Mammary epithelial cell (primary cell): ENCODE measurements at regions of chr2 and their contacts with region 1.

Region 1: DNA sequence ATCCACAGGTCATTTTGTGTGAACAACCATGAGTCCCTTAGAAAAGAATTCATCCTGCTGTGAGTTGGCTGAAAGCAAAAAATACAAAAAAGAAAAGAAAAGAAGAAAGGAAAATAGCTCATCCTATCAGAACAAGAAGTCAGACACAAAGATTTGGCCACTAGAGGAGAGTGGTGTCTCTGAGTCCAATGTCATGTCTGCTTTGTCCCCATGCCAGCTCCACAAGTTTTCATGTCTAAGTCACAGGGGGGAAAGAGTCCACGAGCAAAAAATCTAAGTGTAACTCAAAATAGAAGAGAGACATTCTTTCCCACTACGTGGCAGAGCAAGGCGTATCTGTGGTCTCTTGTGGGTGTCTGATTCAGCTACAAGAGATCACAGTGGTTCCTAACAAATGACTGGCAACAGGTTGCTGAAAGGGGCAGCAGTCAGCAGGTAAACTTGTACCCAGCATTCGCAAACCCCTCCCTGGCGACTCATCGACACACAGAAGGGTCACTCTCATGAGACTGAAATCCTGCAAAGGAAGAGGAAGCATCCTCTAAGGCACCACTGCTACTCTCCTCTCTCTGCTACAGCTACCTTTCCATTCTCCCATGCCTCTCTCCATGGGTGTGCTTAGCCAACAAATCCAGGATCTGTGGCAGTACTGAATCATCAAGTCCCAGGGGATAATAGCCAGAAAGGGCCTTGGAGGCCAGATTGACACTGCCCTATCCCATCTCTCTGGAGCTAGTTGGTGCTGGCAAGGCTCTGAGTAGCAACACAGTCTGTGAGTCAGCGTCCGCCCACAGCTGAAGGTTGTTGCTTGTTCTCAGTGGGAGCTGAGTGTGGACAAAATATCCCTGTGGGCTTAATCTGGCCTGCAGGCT is 123.0 kb upstream of the SLC39A10 start:
- DNase-seq: peak; percentile 84
- H3K4me3 ChIP-seq: no peak overlapping the region
- H3K27ac ChIP-seq: peak overlapping the region; percentile 56
- H3K4me1 ChIP-seq: peaks cover 19% of the 10 kb centered on the region
- H3K27me3 ChIP-seq: no peaks in the 10 kb centered on the region
- CTCF ChIP-seq: peak in 1 of 2 donors; percentile 25

Region 2: GRCh38 chr2:195575879-195576401 is 41.9 kb after region 1 on chr2:
- CTCF ChIA-PET with region 1: no interaction called
- dilution Hi-C with region 1: loop called (anchors 5 kb)
- in situ Hi-C with region 1: no loop called
- intact Hi-C with region 1: no loop called
- DNase-seq: peak; percentile 83
- H3K4me3 ChIP-seq: no peak overlapping the region
- H3K27ac ChIP-seq: peak overlapping the region; percentile 75
- H3K4me1 ChIP-seq: peaks cover 4% of the 10 kb centered on the region
- H3K27me3 ChIP-seq: no peaks in the 10 kb centered on the region
- CTCF ChIP-seq: no peak

Region 3: DNA sequence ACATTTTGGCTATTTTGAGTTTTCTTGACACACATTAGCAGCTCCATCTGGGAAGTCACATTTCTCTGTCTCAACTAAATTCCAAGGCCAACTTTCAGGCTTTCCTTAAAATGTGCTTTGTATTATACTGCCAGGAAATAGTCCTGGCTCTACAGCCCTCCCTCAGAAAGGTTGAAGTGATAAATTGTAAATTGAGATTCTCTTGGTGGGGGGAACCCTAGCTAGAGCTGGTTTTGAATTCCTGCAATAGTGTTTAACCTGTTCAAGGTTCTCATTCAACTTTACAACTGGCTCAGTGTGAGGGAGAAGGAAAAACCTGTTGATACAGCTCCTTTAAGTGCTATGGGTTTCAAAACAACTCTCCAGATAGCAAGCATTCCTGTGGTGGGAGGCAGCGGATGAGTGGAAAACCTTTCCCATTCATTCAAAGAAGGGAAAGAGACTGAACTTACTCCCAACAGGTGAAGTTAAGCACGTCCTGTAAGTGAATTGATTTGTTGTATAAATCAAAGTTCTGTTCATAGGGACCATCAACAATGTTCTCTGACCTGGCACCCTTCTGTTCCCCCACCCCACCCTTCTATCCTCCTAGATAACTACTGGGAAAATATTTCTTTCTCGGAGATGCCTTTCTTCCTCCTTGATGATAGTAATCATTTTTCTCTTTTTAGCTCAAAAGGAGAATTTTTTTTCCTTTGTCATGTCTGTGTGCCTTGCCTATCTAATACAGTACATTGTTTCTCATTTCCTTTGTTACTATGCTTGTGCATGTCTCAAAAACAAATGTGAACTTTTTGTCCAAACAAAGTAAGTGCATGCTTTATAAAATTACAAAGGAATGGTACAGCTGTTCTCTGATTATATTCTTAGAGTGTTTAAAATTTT is 78.8 kb after region 1 on chr2:
- CTCF ChIA-PET with region 1: no interaction called
- dilution Hi-C with region 1: no loop called
- in situ Hi-C with region 1: no loop called
- intact Hi-C with region 1: no loop called
- DNase-seq: peak; percentile 78
- H3K4me3 ChIP-seq: peak overlapping the region in 2 of 3 experiments; percentile 53 to 71
- H3K27ac ChIP-seq: peak overlapping the region; percentile 88
- H3K4me1 ChIP-seq: peaks cover 19% of the 10 kb centered on the region
- H3K27me3 ChIP-seq: no peaks in the 10 kb centered on the region
- CTCF ChIP-seq: no peak

Region 4: DNA sequence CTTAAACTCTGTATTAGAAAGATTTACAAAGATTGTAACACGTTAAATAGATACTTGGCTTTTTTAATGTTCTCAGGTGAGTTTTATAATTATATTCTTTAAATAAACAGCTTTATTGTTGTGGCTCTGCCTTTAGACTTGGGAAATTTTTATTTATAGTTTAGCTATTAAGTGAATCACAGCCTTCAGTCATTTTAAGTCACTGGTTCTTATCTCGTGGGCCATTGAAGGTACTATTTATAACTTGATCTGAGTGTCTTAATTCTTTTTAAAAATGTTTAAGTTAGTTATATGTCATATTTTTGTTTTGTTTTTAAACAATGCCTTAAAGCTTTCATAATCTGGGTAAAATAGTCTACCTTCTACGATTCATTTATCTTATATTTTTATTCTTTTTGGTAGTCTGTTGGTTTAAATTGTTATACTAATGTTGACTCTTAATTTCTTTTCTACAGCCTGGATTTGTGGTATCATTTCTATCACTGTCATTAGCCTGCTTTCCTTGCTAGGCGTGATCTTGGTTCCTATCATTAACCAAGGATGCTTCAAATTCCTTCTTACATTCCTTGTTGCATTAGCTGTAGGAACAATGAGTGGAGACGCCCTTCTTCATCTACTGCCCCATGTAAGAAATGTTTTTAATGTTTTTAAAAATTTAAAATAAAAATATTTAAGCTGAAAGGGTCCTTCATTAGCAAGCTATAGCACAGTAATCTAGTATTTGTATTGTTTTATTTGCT is 172.3 kb after region 1 on chr2:
- CTCF ChIA-PET with region 1: no interaction called
- dilution Hi-C with region 1: no loop called
- in situ Hi-C with region 1: no loop called
- intact Hi-C with region 1: no loop called
- DNase-seq: no peak
- H3K4me3 ChIP-seq: no peak overlapping the region
- H3K27ac ChIP-seq: no peak overlapping the region
- H3K4me1 ChIP-seq: no peaks in the 10 kb centered on the region
- H3K27me3 ChIP-seq: no peaks in the 10 kb centered on the region
- CTCF ChIP-seq: no peak